ENCODE measurements at regions of chr6 and their contacts with region 1.

Region 1: GRCh38 chr6:43667245-43668150 is 20.1 kb downstream of the MRPS18A start:
- DNase-seq: peak; percentile 68 to 97
- H3K4me3 ChIP-seq: peak overlapping the region in 3 of 4 experiments; percentile 11 to 48 (median 23); a peak in 4 of 8 replicates
- H3K27ac ChIP-seq: no peak overlapping the region
- H3K4me1 ChIP-seq: peaks cover 5 to 27% (median 22%) of the 10 kb centered on the region in 4 experiments
- H3K27me3 ChIP-seq: no peaks in the 10 kb centered on the region; a peak in 2 of 7 replicates
- CTCF ChIP-seq: peak in 2 of 3 experiments; percentile 94 to 99; a peak in 3 of 4 replicates
- EP300 ChIP-seq: no peak
- POLR2A ChIP-seq: no peak
- RAD21 ChIP-seq: peak; percentile 94 to 95

Region 2: GRCh38 chr6:43509930-43510826 is 157.3 kb before region 1 on chr6 and contains the start of gene LRRC73:
- CTCF ChIA-PET with region 1: no interaction called
- POLR2A ChIA-PET with region 1: no interaction called
- DNase-seq: peak in 1 of 2 experiments; percentile 92
- H3K4me3 ChIP-seq: peak within 1 kb of the TSS; percentile 47 to 77 (median 68)
- H3K27ac ChIP-seq: peak within 1 kb of the TSS; percentile 51
- H3K4me1 ChIP-seq: peaks cover 0 to 21% (median 9%) of the 10 kb centered on the region in 4 experiments; a peak in 5 of 7 replicates
- H3K27me3 ChIP-seq: peaks cover 0 to 19% (median 15%) of the 10 kb centered on the region in 4 experiments; a peak in 5 of 7 replicates
- CTCF ChIP-seq: no peak
- EP300 ChIP-seq: no peak
- POLR2A ChIP-seq: no peak; a peak in 2 of 3 replicates
- RAD21 ChIP-seq: no peak
- total RNA-seq, gene LRRC73: 0.26 and 0.69 TPM in 2 replicates

Region 3: GRCh38 chr6:43629505-43630300 is 37.8 kb before region 1 on chr6:
- CTCF ChIA-PET with region 1: interaction called, 3 read pairs
- POLR2A ChIA-PET with region 1: interaction called, 16 read pairs
- DNase-seq: peak; percentile 90 to 91
- H3K4me3 ChIP-seq: peak overlapping the region; percentile 59 to 89 (median 68)
- H3K27ac ChIP-seq: peak overlapping the region; percentile 90
- H3K4me1 ChIP-seq: peaks cover 0 to 4% (median 0%) of the 10 kb centered on the region in 4 experiments; a peak in 3 of 7 replicates
- H3K27me3 ChIP-seq: no peaks in the 10 kb centered on the region
- CTCF ChIP-seq: no peak
- EP300 ChIP-seq: no peak
- POLR2A ChIP-seq: peak; percentile 64 to 95
- RAD21 ChIP-seq: no peak

Region 4: GRCh38 chr6:43680308-43681200 is 13.1 kb after region 1 on chr6:
- CTCF ChIA-PET with region 1: interaction called, 58 read pairs
- POLR2A ChIA-PET with region 1: interaction called, 85 read pairs
- DNase-seq: no peak
- H3K4me3 ChIP-seq: no peak overlapping the region
- H3K27ac ChIP-seq: no peak overlapping the region
- H3K4me1 ChIP-seq: 0 out of 7 replicates have a peak, but pooled peaks cover 0 to 5% (median 0%) of the 10 kb centered on the region in 4 experiments
- H3K27me3 ChIP-seq: no peaks in the 10 kb centered on the region
- CTCF ChIP-seq: no peak
- EP300 ChIP-seq: no peak
- POLR2A ChIP-seq: no peak
- RAD21 ChIP-seq: no peak

Region 5: GRCh38 chr6:43714311-43715055 is 47.0 kb after region 1 on chr6:
- CTCF ChIA-PET with region 1: interaction called, 26 read pairs
- POLR2A ChIA-PET with region 1: interaction called, 6 read pairs
- DNase-seq: no peak
- H3K4me3 ChIP-seq: no peak overlapping the region
- H3K27ac ChIP-seq: no peak overlapping the region
- H3K4me1 ChIP-seq: peaks cover 0 to 10% (median 5%) of the 10 kb centered on the region in 4 experiments; a peak in 5 of 7 replicates
- H3K27me3 ChIP-seq: no peaks in the 10 kb centered on the region
- CTCF ChIP-seq: no peak
- EP300 ChIP-seq: no peak
- POLR2A ChIP-seq: no peak
- RAD21 ChIP-seq: no peak

Region 6: DNA sequence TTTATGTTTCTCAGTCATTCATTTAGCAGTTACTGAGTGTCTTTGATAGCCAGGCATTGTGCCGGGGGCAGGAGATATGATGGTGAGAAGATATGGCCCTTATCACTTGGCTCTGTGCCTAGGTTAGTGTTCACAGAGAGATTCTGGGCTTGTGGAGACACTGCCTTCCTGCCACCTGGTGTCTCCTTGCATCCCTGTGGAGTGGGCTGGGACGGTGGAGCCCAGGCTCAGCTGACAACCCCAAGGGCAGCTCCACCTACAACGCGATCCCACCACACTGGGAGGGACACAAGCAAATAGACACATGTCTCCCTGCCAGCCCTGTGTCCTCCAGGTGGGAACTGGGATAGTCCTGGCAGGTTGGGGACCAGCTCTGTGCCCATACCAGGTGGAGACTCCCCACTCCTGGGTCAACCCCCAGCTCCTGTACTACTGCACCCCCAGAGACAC is 72.2 kb after region 1 on chr6:
- CTCF ChIA-PET with region 1: interaction called, 31 read pairs
- POLR2A ChIA-PET with region 1: interaction called, 3 read pairs
- DNase-seq: no peak
- H3K4me3 ChIP-seq: no peak overlapping the region
- H3K27ac ChIP-seq: no peak overlapping the region
- H3K4me1 ChIP-seq: peaks cover 0 to 20% (median 3%) of the 10 kb centered on the region in 4 experiments; a peak in 4 of 7 replicates
- H3K27me3 ChIP-seq: no peaks in the 10 kb centered on the region
- CTCF ChIP-seq: no peak
- EP300 ChIP-seq: no peak
- POLR2A ChIP-seq: no peak
- RAD21 ChIP-seq: no peak

Region 7: DNA sequence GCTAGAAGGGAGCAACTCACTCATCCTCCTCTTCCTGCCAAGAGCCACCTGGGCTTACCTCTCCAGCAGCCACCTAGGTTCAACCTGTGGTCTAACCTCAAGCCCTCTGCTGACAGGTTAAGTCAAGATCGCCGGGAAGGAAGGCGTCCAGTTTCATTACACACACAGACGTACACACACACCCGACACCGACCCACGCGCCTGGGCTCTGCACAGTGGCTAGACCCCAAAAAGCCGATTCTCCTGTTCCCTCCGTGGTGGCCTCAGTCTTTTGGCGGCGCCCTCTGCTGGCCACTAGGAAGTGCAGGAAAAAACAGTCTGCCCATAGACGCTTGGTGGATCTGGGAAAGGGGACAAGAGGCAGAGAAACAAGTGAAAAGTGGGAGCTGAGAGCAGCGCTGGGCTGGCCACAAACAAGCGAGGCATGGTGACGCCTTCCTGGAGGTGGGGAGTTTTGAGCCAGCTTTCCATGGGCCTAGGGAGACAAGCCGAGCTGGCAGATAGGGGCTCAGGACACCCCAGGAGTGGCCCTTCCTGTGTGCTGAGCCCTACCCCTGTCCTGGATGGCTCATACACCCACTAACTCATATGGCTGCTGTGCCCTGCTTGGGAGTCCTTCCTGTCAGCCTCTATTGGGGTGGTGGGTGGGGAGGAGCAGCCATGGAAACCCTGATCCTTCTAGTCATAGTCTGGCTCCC is 407.1 kb after region 1 on chr6:
- CTCF ChIA-PET with region 1: interaction called, 59 read pairs
- POLR2A ChIA-PET with region 1: interaction called, 10 read pairs
- DNase-seq: peak in 1 of 2 experiments; percentile 81
- H3K4me3 ChIP-seq: peak overlapping the region in 1 of 4 experiments; percentile 56; a peak in 1 of 8 replicates
- H3K27ac ChIP-seq: no peak overlapping the region
- H3K4me1 ChIP-seq: peaks cover 9 to 32% (median 26%) of the 10 kb centered on the region in 4 experiments
- H3K27me3 ChIP-seq: peaks cover 0 to 9% (median 2%) of the 10 kb centered on the region in 4 experiments; a peak in 4 of 7 replicates
- CTCF ChIP-seq: peak in 2 of 3 experiments; percentile 88 to 91; a peak in 3 of 4 replicates
- EP300 ChIP-seq: no peak
- POLR2A ChIP-seq: no peak
- RAD21 ChIP-seq: peak; percentile 67 to 77

Region 8: GRCh38 chr6:44373787-44374186 is 706.3 kb after region 1 on chr6:
- CTCF ChIA-PET with region 1: no interaction called
- POLR2A ChIA-PET with region 1: no interaction called
- DNase-seq: no peak
- H3K4me3 ChIP-seq: no peak overlapping the region
- H3K27ac ChIP-seq: no peak overlapping the region
- H3K4me1 ChIP-seq: no peaks in the 10 kb centered on the region
- H3K27me3 ChIP-seq: no peaks in the 10 kb centered on the region
- CTCF ChIP-seq: no peak
- EP300 ChIP-seq: no peak
- POLR2A ChIP-seq: no peak
- RAD21 ChIP-seq: no peak